ENCODE measurements at regions of chr2 and their contacts with region 1.

Region 1: GRCh38 chr2:218898109-218898878 is 17.6 kb downstream of the WNT10A start:
- DNase-seq: no peak
- H3K4me3 ChIP-seq: no peak overlapping the region
- CTCF ChIP-seq: peak; percentile 90

Region 2: GRCh38 chr2:218860950-218861381 is 37.3 kb before region 1 on chr2:
- CTCF ChIA-PET with region 1: interaction called, 22 read pairs
- POLR2A ChIA-PET with region 1: no interaction called
- DNase-seq: no peak
- H3K4me3 ChIP-seq: no peak overlapping the region
- CTCF ChIP-seq: no peak

Region 3: GRCh38 chr2:218908721-218909619 is 10.7 kb after region 1 on chr2:
- CTCF ChIA-PET with region 1: interaction called, 35 read pairs
- POLR2A ChIA-PET with region 1: no interaction called
- DNase-seq: peak; percentile 24
- H3K4me3 ChIP-seq: peak overlapping the region; percentile 62
- CTCF ChIP-seq: no peak

Region 4: DNA sequence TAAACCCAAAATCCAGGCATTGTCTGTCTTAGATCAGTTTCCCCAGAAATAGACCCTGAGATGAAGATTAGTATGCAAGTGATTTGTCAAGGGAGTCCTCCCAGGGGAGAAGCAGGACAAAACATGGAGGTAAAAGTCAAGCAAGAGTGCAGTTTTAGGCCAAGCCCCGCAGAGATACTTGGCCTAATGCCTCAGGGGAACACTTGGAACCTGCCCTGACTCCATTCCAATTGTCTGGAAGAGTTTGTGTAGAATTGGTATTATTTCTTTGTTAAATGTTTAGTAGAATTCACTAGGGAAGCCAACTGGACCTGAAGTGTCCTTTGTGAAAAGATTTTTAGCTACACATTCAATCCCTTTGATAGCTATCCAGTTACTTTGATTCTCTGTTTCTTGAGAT is 16.7 kb after region 1 on chr2:
- CTCF ChIA-PET with region 1: interaction called, 35 read pairs
- POLR2A ChIA-PET with region 1: no interaction called
- DNase-seq: no peak
- H3K4me3 ChIP-seq: no peak overlapping the region
- CTCF ChIP-seq: no peak

Measured in AG04449 (cell line).